Dendritic cell treated with granulocyte-macrophage colony-stimulating factor and Interleukin-4, amounts not matched to agents 40 ng/mL and 50 ng/mL, for 4 days (primary cell): ENCODE measurements at regions of chr10 and their contacts with region 1.

Region 1: DNA sequence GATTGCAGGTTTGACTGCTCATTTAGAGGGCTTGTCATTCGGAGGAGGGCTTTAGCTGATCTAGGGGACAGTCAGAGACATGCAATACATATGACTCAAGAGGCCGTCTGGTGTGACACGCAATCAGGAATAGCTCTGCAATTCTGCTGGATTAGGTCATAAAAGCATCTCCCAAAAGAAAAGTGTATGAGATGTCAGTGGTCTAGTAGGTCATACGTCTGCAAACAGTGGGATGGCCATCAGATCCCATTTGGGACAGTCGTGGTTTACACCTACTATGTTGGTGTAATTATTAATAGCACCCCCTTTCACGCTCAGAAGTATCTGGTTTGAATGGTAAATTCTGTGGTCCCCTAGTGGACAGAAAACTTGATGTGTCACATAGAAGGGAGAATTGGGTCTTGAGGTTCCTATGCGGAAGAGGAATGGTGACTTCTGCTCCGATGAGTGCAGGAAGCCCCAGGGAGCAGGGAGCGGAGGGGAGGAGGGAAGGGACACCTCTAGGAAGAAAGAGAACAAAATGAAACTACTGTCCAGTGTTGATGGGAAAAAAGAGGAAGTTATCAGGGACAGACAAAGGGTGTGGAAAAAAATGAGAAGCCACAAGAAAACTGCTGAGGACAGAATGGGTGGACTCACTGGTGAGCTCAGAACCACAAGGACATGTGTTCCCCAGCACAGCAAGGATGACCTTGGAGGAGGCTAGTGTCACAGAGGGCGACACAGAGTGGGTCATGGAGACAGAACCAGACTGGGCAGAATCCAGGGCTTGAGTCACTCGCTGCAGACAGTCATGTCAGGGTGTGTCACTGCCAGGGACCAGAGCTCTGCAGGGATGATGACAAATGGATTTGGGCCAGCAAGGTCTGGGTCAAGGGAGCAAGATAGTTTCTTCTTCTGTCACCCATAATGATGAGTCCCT is 59.9 kb downstream of the MAP3K8 start:
- H3K4me3 Mint-ChIP-seq: peak overlapping the region; percentile 24
- H3K27ac Mint-ChIP-seq: peak overlapping the region; percentile 98
- H3K4me1 Mint-ChIP-seq: peaks cover 98% of the 10 kb centered on the region
- H3K27me3 Mint-ChIP-seq: no peaks in the 10 kb centered on the region

Region 2: GRCh38 chr10:30433730-30434272 is 60.1 kb before region 1 on chr10 and contains the start of gene MAP3K8:
- intact Hi-C with region 1: loop called (anchors 1 kb)
- H3K4me3 Mint-ChIP-seq: peak within 1 kb of the TSS; percentile 97
- H3K27ac Mint-ChIP-seq: peak within 1 kb of the TSS; percentile 97
- H3K4me1 Mint-ChIP-seq: peaks cover 56% of the 10 kb centered on the region
- H3K27me3 Mint-ChIP-seq: no peaks in the 10 kb centered on the region

Region 3: DNA sequence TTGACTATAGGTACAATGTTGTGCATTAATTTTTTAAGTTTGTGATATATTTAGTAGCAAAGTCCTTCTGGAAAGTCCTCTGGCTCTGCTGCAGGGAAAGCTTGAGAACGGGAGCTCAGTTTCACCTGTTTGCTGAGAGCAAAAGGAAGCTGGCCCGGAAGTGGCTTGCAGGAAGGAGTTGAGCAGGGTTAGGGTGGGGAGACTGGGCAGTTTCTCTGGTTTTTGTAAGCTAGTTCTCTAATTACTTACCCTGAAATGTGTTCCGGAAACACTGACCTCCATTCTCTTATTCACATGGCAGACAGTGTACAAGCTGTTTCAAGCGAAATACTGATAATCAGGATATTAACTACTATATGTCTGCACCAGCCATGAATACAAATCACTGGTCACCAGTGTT is 37.6 kb before region 1 on chr10:
- intact Hi-C with region 1: loop called (anchors 5 kb)
- H3K4me3 Mint-ChIP-seq: no peak overlapping the region
- H3K27ac Mint-ChIP-seq: peak overlapping the region; percentile 84
- H3K4me1 Mint-ChIP-seq: peaks cover 44% of the 10 kb centered on the region
- H3K27me3 Mint-ChIP-seq: no peaks in the 10 kb centered on the region

Region 4: DNA sequence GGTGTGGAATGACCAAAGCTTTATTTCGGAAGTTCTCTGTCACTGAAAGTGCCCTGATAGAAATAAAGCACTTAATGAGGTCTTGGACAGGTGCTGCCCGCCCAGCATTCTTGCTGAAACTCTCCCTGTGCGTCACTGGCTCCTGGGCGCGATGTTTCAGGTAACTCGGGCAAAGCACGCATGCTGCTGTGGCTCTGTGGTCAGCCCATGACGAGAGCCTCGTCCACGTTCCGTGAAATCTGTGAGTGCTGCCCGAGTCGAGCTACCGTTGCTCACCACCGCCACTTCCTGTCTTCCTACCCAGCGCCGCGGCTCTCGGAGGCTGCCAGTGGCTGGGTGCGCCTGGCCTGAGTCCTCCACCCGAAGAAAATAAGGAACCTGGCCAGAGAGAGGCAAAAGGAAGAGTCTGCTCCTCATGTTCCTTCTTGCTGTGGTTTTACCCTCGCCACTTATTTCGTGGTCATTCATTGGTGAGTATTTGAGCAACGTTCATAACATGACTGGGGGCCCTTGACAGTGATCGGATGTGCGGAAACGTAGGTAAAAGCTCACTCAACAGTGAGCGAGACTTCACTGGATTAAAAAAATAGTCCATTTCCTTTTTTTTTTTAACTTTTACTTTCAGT is 35.6 kb after region 1 on chr10:
- intact Hi-C with region 1: loop called (anchors 2 kb)
- H3K4me3 Mint-ChIP-seq: peak overlapping the region; percentile 64
- H3K27ac Mint-ChIP-seq: peak overlapping the region; percentile 96
- H3K4me1 Mint-ChIP-seq: peaks cover 62% of the 10 kb centered on the region
- H3K27me3 Mint-ChIP-seq: no peaks in the 10 kb centered on the region